Prostate gland (tissue), 2 donors: ENCODE measurements at regions of chr22 and their contacts with region 1.

Region 1: GRCh38 chr22:45645526-45646414 is 25.9 kb upstream of the ATXN10 start:
- DNase-seq: peak; percentile 69
- H3K4me3 ChIP-seq: no peak overlapping the region
- H3K27ac ChIP-seq: no peak overlapping the region
- H3K4me1 ChIP-seq: no peaks in the 10 kb centered on the region
- H3K27me3 ChIP-seq: no peaks in the 10 kb centered on the region
- CTCF ChIP-seq: peak; percentile 75 to 99 (median 96)
- POLR2A ChIP-seq: peak; percentile 24

Region 2: GRCh38 chr22:45577746-45578523 is 67.8 kb before region 1 on chr22:
- intact Hi-C with region 1: loop called (anchors 5 kb)
- DNase-seq: peak; percentile 86
- H3K4me3 ChIP-seq: no peak overlapping the region
- H3K27ac ChIP-seq: no peak overlapping the region
- H3K4me1 ChIP-seq: no peaks in the 10 kb centered on the region
- H3K27me3 ChIP-seq: no peaks in the 10 kb centered on the region
- CTCF ChIP-seq: peak; percentile 86 to 97 (median 96)
- POLR2A ChIP-seq: no peak

Region 3: DNA sequence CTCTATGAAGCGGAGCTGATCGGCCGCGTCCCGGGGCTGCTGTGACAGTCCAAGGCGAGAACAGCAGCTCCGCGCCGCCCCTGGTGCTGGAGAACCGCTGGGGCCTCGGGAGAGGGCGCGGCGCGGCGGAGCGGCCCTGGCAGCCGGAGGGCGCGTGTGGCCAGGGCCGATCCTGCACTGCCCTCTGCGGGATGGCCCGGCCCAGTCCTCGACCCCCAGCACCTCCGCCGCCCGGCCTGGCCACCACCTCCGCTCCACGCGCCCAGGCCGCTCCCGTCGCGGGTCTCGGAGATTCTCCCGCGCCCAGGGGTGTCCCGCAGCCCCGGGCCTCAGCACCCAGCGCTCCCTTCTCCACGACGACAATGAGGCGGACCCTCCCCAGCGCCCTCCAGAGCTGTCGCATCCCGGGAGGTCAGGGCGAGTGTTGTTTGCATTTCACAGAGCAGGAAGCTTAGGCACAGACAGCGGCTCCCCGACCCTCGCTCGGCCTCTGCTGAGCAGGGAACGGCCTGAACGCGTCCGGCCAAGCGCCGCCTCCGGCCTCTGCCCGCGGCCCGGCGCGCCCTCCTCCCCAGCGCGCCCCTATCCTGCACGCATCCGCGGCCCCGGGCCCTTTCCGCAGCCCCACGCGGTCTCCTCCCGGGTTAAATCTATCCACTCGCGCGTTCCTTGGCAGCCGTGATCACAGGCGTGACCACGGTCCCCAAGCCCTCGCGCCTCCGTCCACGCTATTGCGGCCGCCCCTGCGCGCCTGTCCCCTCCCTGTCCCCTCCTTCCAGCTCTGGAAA is 221.5 kb after region 1 on chr22:
- intact Hi-C with region 1: loop called (anchors 2 kb)
- DNase-seq: no peak
- H3K4me3 ChIP-seq: peak overlapping the region; percentile 0 to 16
- H3K27ac ChIP-seq: no peak overlapping the region
- H3K4me1 ChIP-seq: peaks cover 11% of the 10 kb centered on the region
- H3K27me3 ChIP-seq: peaks cover 6% of the 10 kb centered on the region
- CTCF ChIP-seq: peak in 3 of 4 experiments; percentile 36 to 66 (median 58)
- POLR2A ChIP-seq: no peak